A673 (cell line): ENCODE measurements at regions of chr7 and their contacts with region 1.

Region 1: DNA sequence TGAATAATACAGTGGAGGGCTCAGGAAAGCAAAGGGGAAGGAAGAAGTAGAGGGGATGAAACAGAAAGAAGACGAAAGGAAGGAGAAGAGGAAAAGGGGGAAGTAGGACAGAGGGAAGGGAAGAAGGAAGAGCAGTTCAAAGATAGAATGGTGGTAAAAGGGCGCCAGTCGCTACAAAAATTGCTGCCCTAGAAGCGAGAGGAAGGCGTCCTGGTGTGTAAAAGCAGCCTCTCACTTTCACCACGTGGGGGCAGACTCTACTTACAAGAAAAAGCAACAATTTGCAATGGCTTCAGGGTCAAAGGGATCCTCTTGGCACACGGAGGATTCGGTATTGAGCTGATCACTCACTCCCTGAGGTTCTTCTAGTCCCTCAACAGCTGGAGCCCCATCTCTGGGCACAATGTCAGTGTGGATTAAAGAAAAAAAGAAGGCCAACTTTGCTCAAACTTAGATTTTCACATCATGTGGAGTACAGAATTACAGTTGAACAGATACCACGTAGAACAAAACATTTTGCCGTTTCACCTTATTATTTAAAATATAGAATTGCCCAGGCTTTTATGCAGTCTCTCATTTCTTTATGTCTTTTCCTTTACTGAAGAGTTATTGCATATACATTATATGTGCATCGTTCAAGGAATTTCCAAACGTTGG is 31.4 kb upstream of the NPVF start:
- DNase-seq: peak; percentile 88
- H3K4me3 ChIP-seq: no peak overlapping the region
- H3K27ac ChIP-seq: no peak overlapping the region
- H3K4me1 ChIP-seq: peaks cover 22% of the 10 kb centered on the region
- H3K27me3 ChIP-seq: peaks cover 9% of the 10 kb centered on the region
- CTCF ChIP-seq: peak; percentile 90

Region 2: GRCh38 chr7:25369786-25370185 is 110.1 kb after region 1 on chr7:
- CTCF ChIA-PET with region 1: no interaction called
- POLR2A ChIA-PET with region 1: no interaction called
- intact Hi-C with region 1: no loop called
- DNase-seq: no peak
- H3K4me3 ChIP-seq: no peak overlapping the region
- H3K27ac ChIP-seq: no peak overlapping the region
- H3K4me1 ChIP-seq: no peaks in the 10 kb centered on the region
- H3K27me3 ChIP-seq: peaks cover 45% of the 10 kb centered on the region
- CTCF ChIP-seq: no peak

Region 3: DNA sequence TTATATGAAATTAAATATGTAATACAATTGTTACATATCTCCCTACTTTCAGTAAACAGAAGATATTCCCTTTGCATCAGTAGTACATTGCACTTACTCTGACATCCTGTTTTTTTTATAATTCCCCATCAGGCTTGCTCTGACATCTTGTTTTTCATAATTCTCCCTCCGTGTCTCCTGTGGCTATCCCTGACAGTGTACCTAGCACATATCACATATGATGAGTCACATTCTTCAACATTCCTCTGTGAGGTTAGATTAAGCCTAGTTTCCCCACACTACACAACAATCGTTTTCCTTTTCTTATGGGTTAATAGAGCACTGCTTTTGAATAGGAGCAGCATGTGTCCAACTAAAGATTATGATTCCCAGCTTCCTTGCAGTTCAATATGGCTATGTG is 219.2 kb after region 1 on chr7:
- CTCF ChIA-PET with region 1: no interaction called
- POLR2A ChIA-PET with region 1: no interaction called
- intact Hi-C with region 1: no loop called
- DNase-seq: no peak
- H3K4me3 ChIP-seq: no peak overlapping the region
- H3K27ac ChIP-seq: no peak overlapping the region
- H3K4me1 ChIP-seq: no peaks in the 10 kb centered on the region
- H3K27me3 ChIP-seq: peaks cover 9% of the 10 kb centered on the region
- CTCF ChIP-seq: no peak

Region 4: DNA sequence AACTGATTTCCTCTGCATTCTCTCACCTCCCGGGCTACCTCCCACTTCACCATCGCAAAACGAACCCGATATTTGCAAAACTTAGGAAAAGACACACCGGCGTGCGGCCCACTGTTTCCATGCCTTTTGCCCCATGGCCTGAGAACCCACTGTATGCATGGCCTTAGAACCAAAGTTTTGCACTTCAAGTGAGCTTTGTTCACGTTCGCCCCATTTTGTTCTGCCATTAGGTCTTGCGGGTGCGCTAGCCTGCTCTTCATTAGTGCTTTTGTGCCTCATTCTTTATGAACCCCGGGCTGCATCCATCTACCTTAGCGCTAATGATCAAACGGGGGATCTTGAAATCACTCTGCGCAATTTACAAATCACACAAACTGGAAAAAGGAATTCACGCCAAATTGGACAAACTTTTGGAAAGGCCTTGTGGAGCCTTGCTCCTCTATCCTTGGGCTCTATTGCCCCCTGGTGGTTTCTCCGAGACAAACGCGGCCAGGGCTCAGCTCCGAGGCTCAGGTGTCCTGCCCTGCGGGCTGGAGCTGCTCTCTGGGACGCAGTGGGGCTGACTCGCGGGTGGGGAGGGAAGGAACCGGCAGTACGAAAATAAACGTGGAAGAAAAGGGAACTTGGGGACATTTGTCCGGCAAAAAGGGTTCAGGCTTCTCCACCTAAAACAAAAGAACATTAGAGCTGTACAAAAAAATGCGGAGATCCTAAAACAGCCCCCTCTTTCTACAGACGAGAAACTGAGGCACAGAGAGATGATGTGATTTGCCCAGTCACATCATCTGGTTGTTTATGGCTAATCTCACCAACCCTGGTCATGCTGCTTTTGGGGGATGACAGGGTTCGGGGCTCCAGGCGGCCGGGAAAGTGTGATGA is 591.9 kb after region 1 on chr7:
- CTCF ChIA-PET with region 1: interaction called, 4 read pairs
- POLR2A ChIA-PET with region 1: no interaction called
- intact Hi-C with region 1: loop called (anchors 1 kb)
- DNase-seq: peak; percentile 87
- H3K4me3 ChIP-seq: peak overlapping the region; percentile 20
- H3K27ac ChIP-seq: no peak overlapping the region
- H3K4me1 ChIP-seq: peaks cover 6% of the 10 kb centered on the region
- H3K27me3 ChIP-seq: peaks cover 16% of the 10 kb centered on the region
- CTCF ChIP-seq: peak; percentile 92